H1 (cell line): ENCODE measurements at regions of chr3 and their contacts with region 1.

Region 1: DNA sequence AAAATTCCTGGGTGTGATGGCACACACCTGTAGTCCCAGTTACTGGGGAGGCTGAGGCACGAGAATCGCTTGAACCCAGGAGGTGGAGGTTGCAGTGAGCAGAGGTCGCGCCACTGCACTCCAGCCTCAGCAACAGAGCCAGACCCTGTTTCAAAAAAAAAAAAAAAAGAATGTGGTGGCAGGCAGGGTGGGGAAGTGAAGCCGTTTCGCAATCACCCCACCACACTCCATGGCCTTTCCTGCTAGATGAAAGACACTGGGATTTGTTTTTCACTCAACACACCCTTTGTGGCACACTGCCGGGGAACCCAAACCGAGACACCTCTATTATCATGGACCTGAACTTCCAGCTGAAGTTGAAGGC is 172.4 kb upstream of the IQSEC1 start:
- DNase-seq: no peak
- H3K4me3 ChIP-seq: no peak overlapping the region
- H3K27ac ChIP-seq: no peak overlapping the region
- H3K4me1 ChIP-seq: peaks cover 0 to 4% (median 0%) of the 10 kb centered on the region in 4 experiments; a peak in 3 of 7 replicates
- H3K27me3 ChIP-seq: no peaks in the 10 kb centered on the region
- CTCF ChIP-seq: no peak
- EP300 ChIP-seq: no peak
- POLR2A ChIP-seq: no peak
- RAD21 ChIP-seq: no peak

Region 2: DNA sequence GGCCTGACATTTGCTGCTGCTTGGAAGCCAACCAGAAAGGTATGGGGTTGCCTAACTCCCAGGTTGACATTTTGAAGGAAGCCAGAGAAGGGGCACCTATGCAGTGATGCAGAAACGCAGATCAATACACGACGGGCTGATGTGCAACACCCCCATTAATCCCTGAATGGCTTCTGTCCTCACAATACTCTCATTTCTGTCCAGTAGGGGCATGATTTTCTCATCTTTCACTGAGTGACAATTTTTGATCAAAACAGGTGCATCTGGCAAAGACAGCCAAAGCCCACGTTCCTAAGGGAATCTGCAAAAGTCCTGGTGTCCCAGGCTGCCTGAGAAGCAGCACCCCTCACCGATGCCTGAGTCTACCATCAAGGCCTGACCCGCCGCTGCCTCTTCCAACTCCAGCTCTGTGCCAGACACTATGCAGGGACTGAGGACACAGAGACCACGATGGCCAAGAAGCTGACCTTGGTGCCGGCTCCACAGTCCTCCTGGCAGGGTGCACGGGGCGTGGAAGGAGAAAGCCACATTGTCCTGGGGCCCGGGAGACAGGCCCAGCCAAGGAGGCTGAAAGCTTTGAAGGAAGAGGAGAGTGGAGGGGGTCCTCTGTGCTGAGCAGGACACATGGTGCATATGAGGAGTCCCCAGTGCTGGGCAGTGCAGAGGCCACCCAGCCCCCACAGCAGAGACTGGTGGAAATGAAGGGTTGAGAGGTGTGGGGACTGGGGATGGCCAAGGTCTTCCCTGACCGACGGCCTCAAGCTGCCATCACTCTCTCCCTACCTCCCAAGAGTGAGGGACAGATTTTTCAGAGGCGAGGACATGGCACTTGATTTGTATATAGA is 14.9 kb after region 1 on chr3:
- CTCF ChIA-PET with region 1: interaction called, 35 read pairs
- POLR2A ChIA-PET with region 1: no interaction called
- DNase-seq: no peak
- H3K4me3 ChIP-seq: no peak overlapping the region
- H3K27ac ChIP-seq: no peak overlapping the region
- H3K4me1 ChIP-seq: no peaks in the 10 kb centered on the region; a peak in 1 of 7 replicates
- H3K27me3 ChIP-seq: no peaks in the 10 kb centered on the region
- CTCF ChIP-seq: peak in 1 of 3 experiments; percentile 15; a peak in 1 of 4 replicates
- EP300 ChIP-seq: no peak
- POLR2A ChIP-seq: no peak
- RAD21 ChIP-seq: no peak